Left colon (tissue), 2 donors: ENCODE measurements at regions of chr3 and their contacts with region 1.

Region 1: GRCh38 chr3:96863129-96863740 is 48.8 kb downstream of the EPHA6 start:
- DNase-seq: peak in 1 of 2 donors; percentile 18
- ATAC-seq: no peak

Region 2: DNA sequence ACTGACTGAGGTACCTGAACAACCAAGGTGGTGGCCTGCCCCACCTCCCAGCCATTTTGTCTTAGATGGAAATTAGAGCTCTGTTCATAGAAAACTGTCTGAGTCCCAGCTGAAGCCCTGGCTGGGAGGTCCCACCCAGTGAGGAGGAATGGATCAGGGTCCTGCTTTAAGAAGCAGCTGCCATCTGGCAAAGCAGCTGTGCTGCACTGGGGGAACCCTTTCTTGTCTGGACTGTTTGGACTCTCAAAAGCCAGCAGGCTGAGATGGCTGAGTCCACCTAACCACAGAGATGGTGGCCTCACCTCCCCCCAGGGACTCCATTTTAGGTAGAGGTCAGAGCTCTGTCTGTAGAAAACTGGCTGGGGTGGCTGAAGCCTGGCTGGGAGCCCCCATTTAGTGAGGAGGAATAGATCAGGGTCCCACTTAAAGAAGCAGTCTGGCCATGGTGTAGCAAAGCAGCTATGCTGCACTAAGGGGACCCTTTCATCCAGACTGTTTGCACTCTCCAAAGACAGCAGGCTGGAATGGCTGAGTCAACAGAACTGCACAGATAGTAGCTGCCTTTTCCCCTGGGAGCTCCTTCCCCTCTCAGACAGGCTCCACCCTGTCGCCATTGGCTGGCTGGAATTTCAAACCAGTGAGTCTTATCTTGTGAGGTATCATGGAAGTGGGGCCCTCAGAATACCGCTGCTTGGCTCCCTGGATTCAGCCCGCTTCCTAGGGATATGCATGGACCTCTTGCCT is 68.1 kb after region 1 on chr3:
- intact Hi-C with region 1: no loop called
- DNase-seq: no peak
- ATAC-seq: no peak

Region 3: DNA sequence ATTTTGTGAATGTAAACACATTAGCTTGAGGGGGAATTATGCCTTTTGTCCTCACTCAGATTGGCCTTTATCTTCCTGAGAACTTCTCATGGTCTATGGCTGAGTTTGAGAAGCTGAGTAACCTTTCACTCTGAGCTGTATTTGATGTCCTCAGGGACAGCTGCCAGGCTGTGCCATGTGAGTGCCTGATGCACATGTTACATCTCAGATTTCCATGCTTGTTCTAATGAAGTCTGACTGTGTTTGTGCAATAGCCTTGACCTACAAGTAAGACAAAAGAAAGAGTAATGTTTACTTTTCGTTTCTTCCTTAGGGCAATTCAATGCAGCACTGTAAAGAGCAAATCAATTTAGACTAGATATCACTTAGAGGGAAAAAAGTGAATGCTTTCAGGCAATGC is 857.2 kb after region 1 on chr3:
- intact Hi-C with region 1: loop called in 1 of 2 experiments (anchors 10 kb)
- DNase-seq: no peak
- ATAC-seq: no peak